HAP-1 (cell line): ENCODE measurements at regions of chr2 and their contacts with region 1.

Region 1: GRCh38 chr2:121076885-121077549 is 208.0 kb downstream of the TFCP2L1 start:
- DNase-seq: peak; percentile 58 to 92
- H3K4me3 ChIP-seq: no peak overlapping the region
- H3K4me1 ChIP-seq: peaks cover 17% of the 10 kb centered on the region
- H3K27me3 ChIP-seq: no peaks in the 10 kb centered on the region; the same call in 1 of the 2 replicates

Region 2: DNA sequence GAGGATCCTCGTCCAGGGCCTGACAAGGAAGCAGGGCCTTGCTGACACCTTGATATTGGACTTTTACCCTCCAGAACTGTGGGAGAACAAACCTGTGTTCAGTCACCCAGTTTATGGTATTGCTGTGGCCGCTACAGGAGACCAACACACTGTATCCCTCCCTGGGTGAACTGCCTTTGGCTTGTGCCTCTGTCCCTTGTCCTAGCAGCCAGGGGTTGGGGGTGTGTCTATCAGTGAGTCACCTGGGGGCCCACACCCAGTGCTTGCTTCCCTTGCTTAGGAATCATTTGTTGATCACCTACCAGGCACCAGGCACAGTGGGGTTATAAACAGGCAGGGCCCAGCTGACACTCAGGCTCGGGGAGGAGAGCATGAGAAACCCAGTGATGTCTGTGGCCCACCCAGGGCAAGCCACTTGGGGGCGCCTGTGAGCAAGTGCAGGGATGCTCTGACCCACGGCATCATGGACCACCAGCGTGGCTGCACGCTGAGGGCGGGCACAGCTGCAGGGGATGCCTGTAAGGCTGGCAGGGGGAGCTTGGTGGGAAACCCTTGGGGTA is 870.9 kb before region 1 on chr2:
- in situ Hi-C with region 1: no loop called
- DNase-seq: peak in 1 of 2 experiments; percentile 77
- H3K4me3 ChIP-seq: no peak overlapping the region
- H3K4me1 ChIP-seq: no peaks in the 10 kb centered on the region
- H3K27me3 ChIP-seq: no peaks in the 10 kb centered on the region

Region 3: DNA sequence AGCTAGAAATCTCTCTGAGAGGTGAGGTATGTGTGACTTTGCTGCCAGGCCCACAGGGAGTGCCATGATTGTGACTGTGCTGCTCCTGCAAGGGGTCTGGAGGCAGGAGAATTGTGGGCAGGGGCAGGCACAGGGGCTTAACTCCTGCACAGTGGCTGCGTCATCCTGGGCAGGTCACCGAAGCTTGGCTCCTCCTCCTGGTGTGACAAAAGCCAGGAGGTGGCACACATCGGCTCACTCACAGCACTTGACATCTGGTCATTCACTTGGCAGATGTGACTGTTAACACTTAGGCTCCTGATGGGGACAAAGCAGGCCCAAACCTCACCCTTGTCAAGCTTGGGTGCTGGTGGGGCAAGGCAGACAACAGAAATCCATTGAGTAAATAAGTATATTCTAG is 377.7 kb before region 1 on chr2:
- in situ Hi-C with region 1: loop called (anchors 5 kb)
- DNase-seq: no peak
- H3K4me3 ChIP-seq: no peak overlapping the region
- H3K4me1 ChIP-seq: no peaks in the 10 kb centered on the region
- H3K27me3 ChIP-seq: no peaks in the 10 kb centered on the region